Activated T-helper 1 cell treated with anti-CD3 and anti-CD28 coated beads, Interleukin-12 subunit alpha, Interleukin-12 subunit beta, Interleukin-2, Interleukin-4 antibody, amounts not matched to agents 30 ng/mL and 10 ng/mL and 1 ng/mL, durations not matched to agents 14 hours and 24 hours and 36 hours (primary cell): ENCODE measurements at regions of chr17 and their contacts with region 1.

Region 1: GRCh38 chr17:68512247-68512982 is at the start of gene PRKAR1A:
- DNase-seq: peak; percentile 91
- H3K4me3 Mint-ChIP-seq: peak within 1 kb of the TSS; percentile 97
- H3K27ac Mint-ChIP-seq: peak within 1 kb of the TSS; percentile 99
- H3K4me1 Mint-ChIP-seq: peaks cover 59% of the 10 kb centered on the region
- H3K27me3 Mint-ChIP-seq: no peaks in the 10 kb centered on the region
- total RNA-seq, gene PRKAR1A: 209 and 214 TPM in 2 replicates

Region 2: GRCh38 chr17:67245073-67245755 is 1267.2 kb before region 1 on chr17 and contains the start of gene HELZ:
- intact Hi-C with region 1: loop called (anchors 5 kb)
- DNase-seq: peak; percentile 70
- H3K4me3 Mint-ChIP-seq: peak within 1 kb of the TSS; percentile 89
- H3K27ac Mint-ChIP-seq: peak within 1 kb of the TSS; percentile 78
- H3K4me1 Mint-ChIP-seq: peaks cover 44% of the 10 kb centered on the region
- H3K27me3 Mint-ChIP-seq: peaks cover 4% of the 10 kb centered on the region
- total RNA-seq, gene HELZ: 65.8 and 70.4 TPM in 2 replicates

Region 3: GRCh38 chr17:68184816-68185436 is 327.5 kb before region 1 on chr17:
- intact Hi-C with region 1: loop called (anchors 5 kb)
- DNase-seq: peak; percentile 70
- H3K4me3 Mint-ChIP-seq: peak overlapping the region; percentile 51
- H3K27ac Mint-ChIP-seq: peak overlapping the region; percentile 53
- H3K4me1 Mint-ChIP-seq: peaks cover 57% of the 10 kb centered on the region
- H3K27me3 Mint-ChIP-seq: peaks cover 10% of the 10 kb centered on the region

Region 4: DNA sequence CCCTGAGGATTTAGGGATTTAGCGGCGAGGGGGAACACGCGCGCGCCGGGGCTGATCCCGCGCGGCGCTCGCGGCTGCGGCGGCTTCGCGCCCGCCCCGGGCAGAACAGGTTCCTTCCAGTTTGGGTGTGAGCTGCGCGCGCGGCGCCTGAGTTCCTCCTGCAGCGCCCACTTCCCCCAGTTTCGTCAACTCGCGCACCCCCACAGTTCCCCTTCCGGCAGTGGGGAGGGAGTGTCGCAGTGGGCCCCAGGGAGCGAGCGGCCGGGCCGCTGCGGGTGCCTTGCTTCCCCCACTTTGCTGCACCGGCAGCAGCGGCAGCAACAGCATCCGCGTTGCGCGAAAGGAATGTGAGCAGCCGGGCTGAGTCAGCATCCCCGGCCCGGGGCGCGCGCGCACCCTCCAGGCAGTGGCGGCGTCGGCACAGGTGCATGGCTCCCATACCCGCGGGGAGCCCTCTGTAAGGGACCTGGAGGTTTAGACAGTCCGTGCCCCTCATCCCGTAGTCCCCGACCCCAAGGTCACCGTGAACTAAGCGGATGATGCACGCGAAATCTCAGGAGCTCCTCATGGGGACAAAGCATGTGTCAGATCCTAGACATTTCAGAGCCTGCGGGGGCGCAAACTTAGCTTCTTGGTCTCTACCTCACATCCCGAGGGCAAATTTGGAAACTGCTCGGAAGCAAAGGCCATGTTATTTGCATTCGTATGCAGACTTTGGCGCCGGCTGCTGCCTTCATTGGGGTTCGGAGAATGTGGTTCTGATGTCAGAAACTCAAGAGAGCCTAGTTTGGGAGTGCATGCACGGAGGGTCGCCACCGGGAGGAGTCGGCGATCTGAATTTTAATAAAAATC is 220.3 kb before region 1 on chr17:
- intact Hi-C with region 1: loop called (anchors 5 kb)
- DNase-seq: peak; percentile 90
- H3K4me3 Mint-ChIP-seq: peak overlapping the region; percentile 83
- H3K27ac Mint-ChIP-seq: peak overlapping the region; percentile 84
- H3K4me1 Mint-ChIP-seq: peaks cover 67% of the 10 kb centered on the region
- H3K27me3 Mint-ChIP-seq: peaks cover 8% of the 10 kb centered on the region

Region 5: GRCh38 chr17:68533887-68534694 is 21.7 kb after region 1 on chr17:
- intact Hi-C with region 1: loop called (anchors 2 kb)
- DNase-seq: no peak
- H3K4me3 Mint-ChIP-seq: no peak overlapping the region
- H3K27ac Mint-ChIP-seq: no peak overlapping the region
- H3K4me1 Mint-ChIP-seq: peaks cover 15% of the 10 kb centered on the region
- H3K27me3 Mint-ChIP-seq: no peaks in the 10 kb centered on the region